ENCODE measurements at regions of chr22 and their contacts with region 1.

Region 1: DNA sequence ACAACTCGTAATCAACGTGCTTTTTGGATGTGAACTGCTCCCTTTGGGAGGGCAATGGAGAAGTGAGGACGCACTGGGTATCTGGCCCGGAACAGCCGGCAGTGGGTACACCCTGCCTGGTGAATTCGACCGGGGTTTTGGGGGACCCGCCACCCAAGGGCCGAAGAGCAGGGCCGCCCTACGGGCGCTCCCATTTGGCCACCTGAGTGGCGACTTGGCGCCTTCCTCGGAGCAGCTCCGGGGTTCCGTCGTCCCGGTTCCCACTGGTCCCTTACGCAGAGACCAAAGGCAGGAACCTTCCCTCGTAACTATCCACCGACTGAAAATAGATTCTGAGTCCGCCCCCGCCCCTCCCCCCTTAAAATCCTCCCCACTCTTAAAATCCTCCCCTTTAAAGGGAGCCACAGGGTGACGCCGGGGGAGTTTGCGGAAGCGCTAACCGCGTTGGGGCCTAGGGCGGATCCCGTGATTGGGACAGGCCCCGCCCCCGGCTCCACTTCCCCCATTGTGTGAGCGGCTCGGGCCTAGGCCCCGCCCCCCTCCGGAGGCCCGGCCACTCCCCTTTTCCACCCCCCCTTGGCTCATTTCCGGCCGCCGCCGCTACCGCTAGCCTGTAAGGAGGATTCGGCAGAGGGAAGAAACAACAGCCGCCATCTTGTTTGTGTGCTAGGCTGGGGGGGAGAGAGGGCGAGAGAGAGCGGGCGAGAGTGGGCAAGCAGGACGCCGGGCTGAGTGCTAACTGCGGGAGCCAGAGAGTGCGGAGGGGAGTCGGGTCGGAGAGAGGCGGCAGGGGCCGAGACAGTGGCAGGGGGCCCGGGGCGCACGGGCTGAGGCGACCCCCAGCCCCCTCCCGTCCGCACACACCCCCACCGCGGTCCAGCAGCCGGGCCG is 1.0 kb upstream of the EP300 start:
- DNase-seq: peak; percentile 100
- H3K4me3 Mint-ChIP-seq: peak overlapping the region; percentile 92
- H3K27ac Mint-ChIP-seq: peak overlapping the region; percentile 99
- H3K4me1 Mint-ChIP-seq: peaks cover 29% of the 10 kb centered on the region
- H3K27me3 Mint-ChIP-seq: no peaks in the 10 kb centered on the region

Region 2: GRCh38 chr22:40856513-40857308 is 234.7 kb before region 1 on chr22 and contains the starts of genes ST13 and XPNPEP3:
- CTCF ChIA-PET with region 1: no interaction called
- POLR2A ChIA-PET with region 1: interaction called, 11 read pairs
- DNase-seq: peak; percentile 97
- H3K4me3 Mint-ChIP-seq: peak within 1 kb of the TSS; percentile 95
- H3K27ac Mint-ChIP-seq: peak within 1 kb of the TSS; percentile 99
- H3K4me1 Mint-ChIP-seq: peaks cover 50% of the 10 kb centered on the region
- H3K27me3 Mint-ChIP-seq: no peaks in the 10 kb centered on the region
- total RNA-seq, gene ST13: 138 to 142 TPM
- total RNA-seq, gene XPNPEP3: 11.3 to 13.2 TPM

Region 3: GRCh38 chr22:40922484-40923303 is 168.7 kb before region 1 on chr22:
- CTCF ChIA-PET with region 1: interaction called, 18 read pairs
- POLR2A ChIA-PET with region 1: interaction called, 18 read pairs
- DNase-seq: no peak
- H3K4me3 Mint-ChIP-seq: no peak overlapping the region
- H3K27ac Mint-ChIP-seq: peak overlapping the region; percentile 31
- H3K4me1 Mint-ChIP-seq: peaks cover 4% of the 10 kb centered on the region
- H3K27me3 Mint-ChIP-seq: no peaks in the 10 kb centered on the region

Region 4: DNA sequence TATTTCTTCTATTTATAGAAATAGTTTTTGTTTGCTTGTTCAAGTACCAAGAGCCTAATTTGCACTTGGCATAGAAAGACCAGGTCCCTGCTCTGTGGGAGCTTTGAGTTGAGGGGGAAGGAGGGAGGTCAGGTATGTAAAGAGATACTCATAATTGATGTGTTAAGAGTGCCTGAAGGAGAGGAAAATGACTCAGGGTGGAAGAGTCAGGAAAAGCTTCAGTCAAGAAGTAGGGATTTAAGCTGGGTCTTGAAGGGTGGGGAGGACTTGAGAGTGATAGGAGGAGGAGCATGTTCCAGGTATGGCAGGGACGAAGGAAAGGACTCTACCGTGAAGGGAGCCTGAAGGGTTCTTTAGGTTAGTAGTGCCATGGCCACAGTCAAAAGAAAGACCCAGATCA is 131.2 kb before region 1 on chr22:
- CTCF ChIA-PET with region 1: interaction called, 3 read pairs
- POLR2A ChIA-PET with region 1: interaction called, 13 read pairs
- DNase-seq: no peak
- H3K4me3 Mint-ChIP-seq: no peak overlapping the region
- H3K27ac Mint-ChIP-seq: peak overlapping the region; percentile 27
- H3K4me1 Mint-ChIP-seq: peaks cover 22% of the 10 kb centered on the region
- H3K27me3 Mint-ChIP-seq: no peaks in the 10 kb centered on the region

Region 5: GRCh38 chr22:41022470-41023298 is 68.7 kb before region 1 on chr22:
- CTCF ChIA-PET with region 1: no interaction called
- POLR2A ChIA-PET with region 1: interaction called, 71 read pairs
- DNase-seq: peak; percentile 86
- H3K4me3 Mint-ChIP-seq: peak overlapping the region; percentile 75
- H3K27ac Mint-ChIP-seq: peak overlapping the region; percentile 69
- H3K4me1 Mint-ChIP-seq: peaks cover 22% of the 10 kb centered on the region
- H3K27me3 Mint-ChIP-seq: peaks cover 9% of the 10 kb centered on the region

Region 6: DNA sequence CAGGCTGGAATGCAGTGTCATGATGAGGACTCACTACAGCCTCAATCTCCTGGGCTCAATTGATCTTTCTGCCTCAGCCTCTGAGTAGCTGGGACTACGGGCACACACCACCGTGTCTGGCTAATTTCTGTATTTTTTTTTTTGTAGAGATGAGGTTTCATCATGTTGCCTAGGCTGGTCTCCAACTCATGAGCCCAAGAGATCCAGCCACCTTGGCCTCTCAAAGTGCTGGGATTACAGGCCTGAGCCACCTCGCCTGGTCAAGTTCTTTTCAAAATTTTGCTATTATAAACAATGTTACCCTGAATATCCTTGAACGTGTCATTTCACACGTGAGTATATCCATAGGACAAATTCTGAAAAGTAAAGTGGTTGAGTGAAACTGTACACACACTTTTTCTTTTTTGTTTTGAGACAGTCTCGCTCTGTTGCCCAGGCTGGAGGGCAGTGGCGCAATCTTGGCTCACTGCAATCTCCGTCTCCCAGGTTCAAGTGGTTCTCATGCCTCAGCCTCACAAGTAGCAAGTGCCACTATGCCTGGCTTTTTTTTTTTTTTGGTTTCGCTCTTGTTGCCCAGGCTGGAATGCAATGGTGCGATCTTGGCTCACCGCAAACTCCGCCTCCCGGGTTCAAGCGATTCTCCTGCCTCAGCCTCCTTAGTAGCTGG is 20.6 kb before region 1 on chr22:
- CTCF ChIA-PET with region 1: no interaction called
- POLR2A ChIA-PET with region 1: interaction called, 13 read pairs
- DNase-seq: no peak
- H3K4me3 Mint-ChIP-seq: no peak overlapping the region
- H3K27ac Mint-ChIP-seq: no peak overlapping the region
- H3K4me1 Mint-ChIP-seq: peaks cover 10% of the 10 kb centered on the region
- H3K27me3 Mint-ChIP-seq: no peaks in the 10 kb centered on the region

Region 7: GRCh38 chr22:41106122-41106968 is 15.0 kb after region 1 on chr22:
- CTCF ChIA-PET with region 1: interaction called, 5 read pairs
- POLR2A ChIA-PET with region 1: interaction called, 15 read pairs
- DNase-seq: no peak
- H3K4me3 Mint-ChIP-seq: no peak overlapping the region
- H3K27ac Mint-ChIP-seq: no peak overlapping the region
- H3K4me1 Mint-ChIP-seq: peaks cover 41% of the 10 kb centered on the region
- H3K27me3 Mint-ChIP-seq: no peaks in the 10 kb centered on the region